Astrocyte of the cerebellum (primary cell): ENCODE measurements at regions of chr11 and their contacts with region 1.

Region 1: GRCh38 chr11:83063073-83063754 is 8.5 kb downstream of the RAB30 start:
- DNase-seq: peak; percentile 28
- H3K4me3 ChIP-seq: no peak overlapping the region
- CTCF ChIP-seq: no peak

Region 2: GRCh38 chr11:83162377-83162776 is 99.2 kb after region 1 on chr11:
- in situ Hi-C with region 1: loop called (anchors 5 kb)
- DNase-seq: peak; percentile 5
- H3K4me3 ChIP-seq: no peak overlapping the region
- CTCF ChIP-seq: no peak

Region 3: GRCh38 chr11:83249972-83250593 is 186.9 kb after region 1 on chr11:
- in situ Hi-C with region 1: no loop called
- DNase-seq: peak; percentile 22
- H3K4me3 ChIP-seq: no peak overlapping the region
- CTCF ChIP-seq: peak; percentile 71